OCI-LY7 (cell line): ENCODE measurements at regions of chr13 and their contacts with region 1.

Region 1: DNA sequence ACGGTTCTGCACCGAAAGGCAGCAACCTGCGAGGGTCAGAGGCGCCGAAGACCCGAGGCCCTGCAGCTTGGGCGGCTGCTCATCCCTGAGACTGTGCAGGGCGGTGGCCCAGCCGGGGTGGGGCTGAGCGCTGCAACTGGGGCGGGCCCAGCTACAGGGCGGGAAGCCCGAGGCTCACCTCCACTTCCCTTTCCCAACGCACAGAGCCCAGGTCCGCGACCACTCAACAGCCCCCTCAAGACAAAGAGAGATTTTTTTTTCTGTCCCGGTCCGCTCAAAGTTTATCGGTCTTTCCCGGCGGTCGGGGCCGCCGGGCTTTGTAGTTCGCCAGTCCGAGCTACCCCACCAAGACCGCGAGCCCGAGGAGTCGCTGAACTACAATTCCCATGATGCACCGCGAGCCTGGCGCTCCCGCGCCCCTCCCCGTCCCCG is 573 bp downstream of the KATNAL1 start:
- DNase-seq: peak; percentile 98
- H3K4me3 ChIP-seq: peak overlapping the region; percentile 82
- H3K27ac ChIP-seq: peak overlapping the region; percentile 70
- H3K4me1 ChIP-seq: peaks cover 72% of the 10 kb centered on the region
- CTCF ChIP-seq: no peak

Region 2: GRCh38 chr13:29595380-29596063 is 711.3 kb before region 1 on chr13 and contains the start of gene SLC7A1:
- CTCF ChIA-PET with region 1: no interaction called
- POLR2A ChIA-PET with region 1: no interaction called
- intact Hi-C with region 1: loop called (anchors 10 kb)
- DNase-seq: peak; percentile 94
- H3K4me3 ChIP-seq: peak within 1 kb of the TSS; percentile 99
- H3K27ac ChIP-seq: peak within 1 kb of the TSS; percentile 77
- H3K4me1 ChIP-seq: peaks cover 37% of the 10 kb centered on the region
- CTCF ChIP-seq: no peak
- total RNA-seq, gene SLC7A1: 32.3 and 39.5 TPM in 2 replicates

Region 3: DNA sequence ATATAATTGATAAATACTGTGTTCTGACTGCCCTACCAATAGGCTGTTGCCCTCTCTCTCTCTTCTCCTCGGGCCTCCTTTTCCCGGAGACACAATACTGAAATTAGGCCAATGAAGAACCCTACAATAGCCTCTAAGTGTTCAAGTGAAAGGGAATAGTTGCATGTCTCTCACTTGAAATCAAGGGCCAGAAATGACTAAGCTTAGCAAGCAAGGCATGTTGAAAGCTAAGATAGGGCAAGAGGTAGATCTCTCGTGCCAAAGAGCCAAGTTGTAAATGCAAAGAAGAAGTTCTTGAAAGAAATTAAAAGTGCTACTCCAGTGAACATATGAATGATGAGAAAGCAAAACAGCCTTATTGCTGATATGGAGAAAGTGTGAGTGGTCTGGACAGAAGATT is 12.8 kb before region 1 on chr13:
- CTCF ChIA-PET with region 1: no interaction called
- POLR2A ChIA-PET with region 1: interaction called, 13 read pairs
- intact Hi-C with region 1: no loop called
- DNase-seq: no peak
- H3K4me3 ChIP-seq: no peak overlapping the region
- H3K27ac ChIP-seq: no peak overlapping the region
- H3K4me1 ChIP-seq: peaks cover 45% of the 10 kb centered on the region
- CTCF ChIP-seq: no peak

Region 4: DNA sequence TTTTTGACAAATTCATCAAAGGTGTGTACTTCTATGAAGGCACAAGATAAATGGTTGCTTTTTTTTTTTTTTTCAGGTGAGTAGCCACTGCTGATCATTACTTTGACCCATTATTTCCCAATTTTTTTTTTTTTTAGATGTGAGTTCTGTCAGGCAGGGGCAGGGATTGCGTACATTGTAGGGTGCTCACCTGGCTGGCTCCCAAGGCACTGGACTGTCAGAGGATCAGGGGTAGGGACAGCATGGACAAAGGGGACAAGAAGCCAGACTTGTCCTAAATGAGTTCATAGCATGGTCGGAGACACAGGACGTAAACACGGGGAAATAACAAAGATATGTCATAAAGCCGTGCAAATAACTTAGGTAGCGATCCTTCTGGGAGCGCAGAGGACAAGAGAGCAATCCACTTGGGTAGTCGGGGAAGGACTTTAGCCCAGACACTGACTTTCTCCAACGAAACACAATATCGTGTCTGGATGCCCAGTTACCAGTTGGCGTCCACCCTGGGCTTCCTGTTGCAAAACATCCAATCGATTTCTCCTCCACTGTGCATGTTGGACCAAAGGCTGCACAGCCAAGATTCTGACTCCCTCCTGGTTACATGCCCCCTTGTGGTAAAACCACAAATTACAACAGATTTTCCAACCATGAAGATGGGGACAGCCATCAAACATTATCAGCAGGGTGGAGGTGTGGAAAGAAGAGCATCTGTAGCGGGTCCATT is 28.0 kb after region 1 on chr13:
- CTCF ChIA-PET with region 1: interaction called, 5 read pairs
- POLR2A ChIA-PET with region 1: interaction called, 52 read pairs
- intact Hi-C with region 1: loop called (anchors 1 kb)
- DNase-seq: peak; percentile 60
- H3K4me3 ChIP-seq: peak overlapping the region; percentile 58
- H3K27ac ChIP-seq: peak overlapping the region; percentile 98
- H3K4me1 ChIP-seq: peaks cover 80% of the 10 kb centered on the region
- CTCF ChIP-seq: peak; percentile 85

Region 5: GRCh38 chr13:30395192-30396084 is 88.7 kb after region 1 on chr13:
- CTCF ChIA-PET with region 1: no interaction called
- POLR2A ChIA-PET with region 1: no interaction called
- intact Hi-C with region 1: no loop called
- DNase-seq: peak; percentile 91
- H3K4me3 ChIP-seq: peak overlapping the region; percentile 68
- H3K27ac ChIP-seq: peak overlapping the region; percentile 74
- H3K4me1 ChIP-seq: peaks cover 25% of the 10 kb centered on the region
- CTCF ChIP-seq: no peak

Region 6: DNA sequence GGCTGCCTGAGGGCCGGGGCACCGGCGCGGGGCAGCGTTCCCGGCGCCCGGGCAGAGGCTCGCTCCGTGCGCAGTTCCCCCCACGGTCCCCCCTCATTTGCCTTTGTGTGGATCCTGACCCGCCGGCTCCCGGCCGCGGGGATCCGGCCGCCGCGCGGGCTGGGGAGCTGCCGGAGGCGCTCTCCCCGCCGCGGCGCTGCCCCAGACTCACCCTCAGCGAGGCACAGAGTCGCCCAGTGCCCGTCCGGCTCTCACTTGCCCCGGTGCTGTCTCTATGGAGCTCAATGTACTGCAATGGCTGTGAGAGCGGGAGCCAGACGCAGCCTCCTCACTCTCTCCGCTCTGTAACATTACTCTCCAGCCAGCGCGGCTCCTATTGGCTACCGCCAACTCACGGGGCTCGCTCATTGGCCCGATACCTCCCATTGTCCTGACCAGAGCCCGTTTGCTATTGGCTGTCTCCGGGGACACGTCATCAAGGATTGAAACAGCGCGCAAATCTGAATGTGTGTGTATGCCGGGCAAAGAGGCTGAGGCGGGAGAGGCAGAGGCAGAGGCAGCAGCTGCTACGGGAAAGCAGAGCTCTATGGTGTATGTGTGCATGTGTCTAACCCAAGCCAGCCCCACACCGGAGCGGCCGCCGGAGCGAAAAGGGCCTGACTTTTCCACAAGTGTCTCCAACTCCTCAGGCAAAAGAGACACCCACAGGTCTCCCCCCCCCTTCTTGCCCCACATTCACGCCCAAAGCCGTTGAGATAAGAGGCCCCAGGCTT is 159.0 kb after region 1 on chr13 and contains the start of gene HMGB1:
- CTCF ChIA-PET with region 1: no interaction called
- POLR2A ChIA-PET with region 1: interaction called, 4 read pairs
- intact Hi-C with region 1: loop called (anchors 5 kb)
- DNase-seq: peak; percentile 100
- H3K4me3 ChIP-seq: peak within 1 kb of the TSS; percentile 99
- H3K27ac ChIP-seq: peak within 1 kb of the TSS; percentile 93
- H3K4me1 ChIP-seq: peaks cover 44% of the 10 kb centered on the region
- CTCF ChIP-seq: no peak
- total RNA-seq, gene HMGB1: 1,288 and 1,675 TPM in 2 replicates